ENCODE measurements at regions of chr1 and their contacts with region 1.

Region 1: DNA sequence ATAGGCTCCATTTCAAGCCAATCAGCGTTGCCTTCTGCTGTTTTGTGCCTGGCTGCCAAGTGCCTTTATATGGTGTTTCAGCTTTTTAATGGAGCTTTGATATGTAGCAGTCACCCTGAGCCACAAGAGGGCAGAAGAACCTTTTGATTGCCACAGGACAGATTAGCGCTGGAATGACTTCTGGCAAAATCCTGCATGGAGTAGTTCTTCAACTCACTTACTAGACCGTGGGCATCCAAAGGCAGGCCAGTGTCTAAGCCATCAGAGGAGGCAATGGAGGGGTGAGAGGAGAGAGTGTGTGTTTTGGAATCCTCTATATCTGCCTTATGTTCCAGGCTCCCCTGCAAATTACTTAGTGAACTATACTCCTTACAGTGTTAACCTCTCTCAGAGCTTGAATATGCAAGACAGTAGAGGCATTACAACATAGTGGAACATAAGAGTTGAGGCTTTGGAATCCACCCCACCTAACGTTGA is 56.2 kb downstream of the ST3GAL3 start:
- ATAC-seq: peak; percentile 91 to 97 (median 96)
- H3K4me3 ChIP-seq: no peak overlapping the region
- H3K27ac ChIP-seq: no peak overlapping the region
- H3K4me1 ChIP-seq: peaks cover 12 to 20% of the 10 kb centered on the region in 2 donors

Region 2: DNA sequence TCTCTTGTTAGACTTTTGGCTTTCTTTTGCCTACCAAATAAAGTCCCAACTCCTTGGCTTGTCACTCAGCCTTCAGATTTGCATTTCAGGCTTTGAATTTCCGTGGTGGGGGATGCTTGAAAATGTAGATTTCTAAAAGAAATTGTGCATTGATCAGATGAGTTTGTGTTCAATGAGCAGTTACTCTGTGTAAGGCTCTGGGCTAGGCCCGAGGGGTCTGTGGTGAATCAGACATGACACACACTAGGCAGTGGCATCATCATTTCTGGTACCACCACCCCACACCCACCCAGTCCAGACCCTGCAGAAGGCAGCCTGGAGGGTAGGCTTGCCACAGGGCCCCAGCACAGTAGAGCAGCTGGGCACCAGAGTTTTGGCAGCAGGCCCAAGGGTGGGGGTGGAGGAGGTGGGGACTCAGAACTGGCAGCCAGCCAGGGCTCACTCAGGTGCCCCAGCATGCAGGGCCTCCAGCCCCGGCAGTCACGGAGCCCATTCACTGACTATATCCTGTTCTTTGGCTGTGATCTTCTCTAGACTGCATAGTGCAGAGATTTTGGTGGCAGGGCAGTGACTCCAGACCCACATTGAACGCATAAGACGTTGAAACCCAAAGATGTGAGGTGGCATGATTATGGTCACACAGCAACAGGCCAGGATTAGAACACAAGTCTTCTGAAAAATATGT is 72.9 kb after region 1 on chr1:
- in situ Hi-C with region 1: no loop called
- ATAC-seq: peak; percentile 40 to 95 (median 78)
- H3K4me3 ChIP-seq: no peak overlapping the region
- H3K27ac ChIP-seq: no peak overlapping the region
- H3K4me1 ChIP-seq: peaks cover 0 to 9% of the 10 kb centered on the region in 2 donors

Region 3: GRCh38 chr1:43934101-43934985 is 170.8 kb after region 1 on chr1:
- in situ Hi-C with region 1: loop called in 6 of 9 experiments (anchors 5 to 25 kb)
- ATAC-seq: peak; percentile 3 to 69 (median 48)
- H3K4me3 ChIP-seq: no peak overlapping the region
- H3K27ac ChIP-seq: no peak overlapping the region
- H3K4me1 ChIP-seq: peaks cover 0 to 6% of the 10 kb centered on the region in 2 donors

Region 4: GRCh38 chr1:43946236-43947060 is 182.9 kb after region 1 on chr1 and contains the start of gene IPO13:
- in situ Hi-C with region 1: loop called in 4 of 9 experiments (anchors 10 to 25 kb)
- ATAC-seq: peak; percentile 94 to 97 (median 96)
- H3K4me3 ChIP-seq: peak within 1 kb of the TSS; percentile 57 to 88 (median 65)
- H3K27ac ChIP-seq: peak within 1 kb of the TSS; percentile 97 to 100
- H3K4me1 ChIP-seq: peaks cover 17 to 20% of the 10 kb centered on the region in 2 donors
- total RNA-seq, gene IPO13: 21.1 to 30.4 (median 26.7) TPM

Region 5: DNA sequence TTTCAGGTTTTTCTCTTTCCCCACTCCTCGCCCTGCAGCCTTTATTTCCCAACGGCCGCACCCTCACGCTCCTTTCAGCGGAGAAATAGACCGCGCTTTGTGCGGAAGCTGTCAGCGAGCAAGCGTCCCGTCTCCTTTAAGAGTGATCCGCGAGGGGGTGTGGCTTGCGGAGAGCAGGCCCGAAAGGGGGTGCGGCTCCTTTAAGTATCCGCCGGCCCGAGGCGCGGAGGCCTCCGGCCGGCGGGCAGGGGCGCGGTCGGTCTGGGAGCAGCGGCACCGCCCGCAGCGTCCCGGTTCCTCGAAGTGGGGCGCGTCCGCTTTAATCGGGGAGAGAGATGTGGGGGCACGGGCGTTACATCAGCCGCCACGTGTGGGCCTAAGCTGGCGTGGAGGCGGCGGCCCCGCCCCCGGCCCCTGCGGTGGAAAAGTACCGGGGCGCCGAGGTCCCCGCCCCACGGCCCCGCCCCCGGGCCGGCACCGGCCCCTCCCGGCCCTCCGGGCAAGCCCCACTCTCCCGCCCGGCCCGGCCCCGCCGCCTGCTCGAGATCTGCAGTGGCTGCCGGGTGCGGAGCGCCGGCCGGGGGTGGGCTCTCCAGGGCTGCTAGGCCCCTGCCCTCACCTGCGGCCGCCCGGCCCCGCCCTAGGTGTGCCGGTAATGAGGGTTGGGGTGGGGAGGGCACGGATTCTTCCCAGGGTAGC is 266.5 kb after region 1 on chr1:
- in situ Hi-C with region 1: loop called in 3 of 9 experiments (anchors 25 kb)
- ATAC-seq: peak; percentile 75 to 82 (median 76)
- H3K4me3 ChIP-seq: peak overlapping the region; percentile 61 to 83 (median 77)
- H3K27ac ChIP-seq: peak overlapping the region; percentile 88 to 90
- H3K4me1 ChIP-seq: peaks cover 15 to 19% of the 10 kb centered on the region in 2 donors